RWPE1 (cell line): ENCODE measurements at regions of chr4 and their contacts with region 1.

Region 1: GRCh38 chr4:188021548-188022249 is 26.1 kb downstream of the ZFP42 start:
- DNase-seq: peak; percentile 48
- H3K27ac ChIP-seq: peak overlapping the region; percentile 29; the same call in 1 of the 2 replicates
- CTCF ChIP-seq: no peak

Region 2: DNA sequence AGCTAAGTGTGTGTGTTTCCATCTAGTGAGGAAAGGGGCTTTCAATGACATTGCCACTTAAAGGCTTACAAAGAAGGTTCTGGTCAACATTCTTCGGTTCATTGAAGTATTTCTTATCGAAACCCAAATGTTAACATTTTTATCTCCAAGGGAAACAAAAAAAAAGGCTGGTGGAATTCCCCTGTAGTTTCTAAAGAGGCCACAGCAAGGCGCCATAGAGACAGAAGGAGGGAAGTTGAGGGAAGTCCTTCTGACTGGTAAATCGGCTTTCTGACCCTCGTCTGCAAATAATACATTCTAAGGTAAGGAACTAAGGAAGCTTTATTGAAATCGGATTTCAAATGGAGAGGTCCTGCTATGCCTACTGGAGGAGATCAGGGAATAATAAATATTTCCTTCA is 27.9 kb before region 1 on chr4:
- CTCF ChIA-PET with region 1: interaction called, 11 read pairs
- POLR2A ChIA-PET with region 1: no interaction called
- DNase-seq: no peak
- H3K27ac ChIP-seq: no peak overlapping the region
- CTCF ChIP-seq: no peak

Region 3: DNA sequence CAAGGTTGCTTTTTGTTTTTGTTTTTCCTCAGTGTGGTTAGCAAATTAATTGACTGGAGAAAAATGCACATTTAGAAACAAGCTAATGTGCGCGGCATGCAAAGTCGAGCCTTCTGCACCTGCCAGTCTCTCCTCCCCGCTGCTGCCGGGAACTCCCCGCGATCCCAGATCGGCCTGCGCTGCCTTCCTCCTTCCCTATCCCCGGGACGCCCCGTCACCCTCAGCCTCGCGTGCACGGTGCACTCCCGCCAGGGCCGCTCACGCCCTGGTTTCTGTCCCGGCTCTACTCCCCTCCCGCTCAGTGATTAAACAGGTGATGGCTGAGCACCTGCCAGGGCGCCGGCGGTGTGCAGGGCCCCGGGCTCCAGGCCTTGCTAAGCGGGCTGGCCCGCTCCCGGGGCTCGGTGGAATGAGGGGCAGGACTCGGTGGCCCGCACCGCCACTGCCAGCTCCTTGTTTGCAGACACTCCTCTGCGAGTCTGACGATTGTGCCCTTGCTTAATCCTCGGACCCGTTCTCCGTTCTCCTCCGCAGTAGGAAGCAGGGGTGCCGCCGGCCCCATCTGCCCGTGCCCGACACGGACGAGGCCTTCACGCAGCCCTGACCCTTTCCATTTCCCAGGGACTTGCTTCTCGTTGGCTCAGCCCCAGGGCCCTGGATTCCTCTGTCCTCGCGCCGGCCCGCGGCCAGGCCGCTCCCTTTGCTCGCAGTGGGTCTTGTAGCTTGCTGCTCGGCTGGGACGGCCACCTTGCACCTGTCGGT is 261.0 kb after region 1 on chr4:
- CTCF ChIA-PET with region 1: no interaction called
- POLR2A ChIA-PET with region 1: no interaction called
- DNase-seq: no peak
- H3K27ac ChIP-seq: no peak overlapping the region
- CTCF ChIP-seq: no peak

Region 4: GRCh38 chr4:188329521-188329920 is 307.8 kb after region 1 on chr4:
- CTCF ChIA-PET with region 1: no interaction called
- POLR2A ChIA-PET with region 1: no interaction called
- DNase-seq: no peak
- H3K27ac ChIP-seq: no peak overlapping the region
- CTCF ChIP-seq: no peak

Region 5: GRCh38 chr4:188387179-188387791 is 365.6 kb after region 1 on chr4:
- CTCF ChIA-PET with region 1: no interaction called
- POLR2A ChIA-PET with region 1: no interaction called
- DNase-seq: peak; percentile 41
- H3K27ac ChIP-seq: no peak overlapping the region
- CTCF ChIP-seq: no peak